Sigmoid colon (tissue), 7 donors: ENCODE measurements at regions of chr11 and their contacts with region 1.

Region 1: DNA sequence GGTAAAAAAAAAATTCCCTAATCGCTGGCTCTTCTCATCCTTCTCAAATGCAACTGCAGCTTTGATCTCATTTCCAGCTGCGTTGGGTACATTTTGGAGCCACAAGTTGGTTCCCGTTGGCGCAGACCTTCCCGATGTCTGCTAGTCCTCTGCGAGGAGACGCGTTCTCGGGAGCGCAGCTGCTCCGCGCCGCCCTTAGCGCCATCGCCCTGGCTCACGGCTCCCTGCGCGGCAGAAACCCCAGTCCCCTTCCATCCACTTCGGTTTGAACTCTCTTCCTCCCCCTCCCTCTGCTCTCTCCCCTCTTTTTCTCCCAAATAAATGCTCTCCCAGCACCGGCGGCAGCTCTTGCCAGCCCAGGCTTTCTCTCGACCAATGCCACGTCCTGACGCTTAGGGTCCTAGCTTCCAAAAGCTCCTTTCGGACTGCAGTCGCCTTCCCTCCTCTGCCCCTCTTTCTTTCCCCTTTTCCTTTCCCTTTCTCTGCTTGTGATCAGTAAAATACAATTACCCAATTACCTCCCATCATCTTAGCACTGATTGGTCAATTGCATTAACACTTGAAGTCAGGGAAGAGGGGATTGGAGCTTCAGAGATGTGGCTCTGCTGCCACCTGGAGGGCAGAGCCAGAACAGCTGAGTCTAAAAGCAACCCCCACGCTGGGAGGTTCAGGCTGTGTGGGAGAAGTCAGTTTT is 1165.7 kb downstream of the LRRC4C start:
- DNase-seq: peak; percentile 80
- H3K4me3 ChIP-seq: peak overlapping the region; percentile 49 to 62 (median 56)
- H3K27ac ChIP-seq: peak overlapping the region; percentile 67 to 73 (median 72)
- H3K4me1 ChIP-seq: peaks cover 0 to 17% (median 13%) of the 10 kb centered on the region in 4 donors
- H3K27me3 ChIP-seq: no peaks in the 10 kb centered on the region
- CTCF ChIP-seq: peak; percentile 82 to 93 (median 89)
- EP300 ChIP-seq: no peak
- POLR2A ChIP-seq: no peak

Region 2: DNA sequence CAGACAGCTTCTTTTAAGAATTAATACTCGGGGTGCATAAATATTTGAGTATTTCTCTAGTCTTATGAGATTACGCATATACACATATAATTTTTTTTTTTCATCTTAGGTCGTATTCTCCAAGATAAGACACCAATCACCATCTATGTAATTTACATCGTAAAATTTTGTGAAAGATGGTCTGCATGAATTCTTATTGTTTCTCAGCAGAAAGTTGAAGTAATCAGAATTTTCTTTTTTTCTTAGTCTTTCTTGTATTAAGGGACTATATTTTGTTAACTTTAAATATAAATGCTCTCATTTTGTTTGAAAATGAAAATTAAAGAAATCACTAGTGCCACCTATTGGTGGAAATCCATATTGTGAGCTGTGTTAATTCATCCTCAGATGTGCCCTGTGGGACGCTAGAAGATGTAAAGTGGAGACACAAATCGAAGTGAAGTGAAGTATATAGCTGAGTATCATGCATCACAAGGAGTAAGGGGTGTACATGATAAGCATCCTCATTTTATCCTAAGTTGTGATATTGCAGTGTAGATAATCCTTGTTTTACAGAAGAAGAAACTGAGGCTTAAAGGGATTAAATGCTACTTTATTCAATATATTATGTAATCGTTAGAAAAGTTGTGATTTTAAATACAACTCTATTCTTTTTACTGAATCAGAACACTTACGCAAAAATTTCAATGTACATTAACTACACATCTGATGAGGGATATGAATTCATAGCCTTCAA is 918.7 kb before region 1 on chr11:
- intact Hi-C with region 1: loop called (anchors 10 kb)
- DNase-seq: no peak
- H3K4me3 ChIP-seq: no peak overlapping the region
- H3K27ac ChIP-seq: no peak overlapping the region
- H3K4me1 ChIP-seq: no peaks in the 10 kb centered on the region
- H3K27me3 ChIP-seq: no peaks in the 10 kb centered on the region
- CTCF ChIP-seq: peak in 3 of 4 experiments; percentile 20 to 54 (median 43)
- EP300 ChIP-seq: no peak
- POLR2A ChIP-seq: no peak

Region 3: GRCh38 chr11:40130427-40130826 is 163.4 kb before region 1 on chr11:
- intact Hi-C with region 1: loop called (anchors 5 kb)
- DNase-seq: no peak
- H3K4me3 ChIP-seq: no peak overlapping the region
- H3K27ac ChIP-seq: no peak overlapping the region
- H3K4me1 ChIP-seq: no peaks in the 10 kb centered on the region
- H3K27me3 ChIP-seq: no peaks in the 10 kb centered on the region
- CTCF ChIP-seq: no peak
- EP300 ChIP-seq: no peak
- POLR2A ChIP-seq: no peak

Region 4: DNA sequence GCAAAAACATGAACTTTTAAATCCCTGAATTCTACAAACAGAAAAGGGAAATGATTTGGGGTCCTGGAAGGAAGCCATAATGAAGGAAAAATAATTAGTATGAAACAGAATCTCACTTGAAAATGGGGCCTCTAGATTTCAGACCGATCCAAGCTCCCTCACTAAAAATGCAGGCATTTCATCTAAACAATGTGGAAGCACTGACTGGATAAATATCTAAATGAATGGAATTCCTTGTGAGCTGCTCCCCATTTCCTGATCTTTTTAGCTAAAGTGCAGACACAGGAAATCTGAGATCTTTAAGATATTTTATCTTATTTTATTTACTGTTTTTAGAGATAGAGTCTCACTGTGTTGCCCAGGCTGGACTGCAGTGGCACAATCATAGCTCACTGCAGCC is 90.2 kb before region 1 on chr11:
- intact Hi-C with region 1: no loop called
- DNase-seq: no peak
- H3K4me3 ChIP-seq: no peak overlapping the region
- H3K27ac ChIP-seq: no peak overlapping the region
- H3K4me1 ChIP-seq: no peaks in the 10 kb centered on the region
- H3K27me3 ChIP-seq: no peaks in the 10 kb centered on the region
- CTCF ChIP-seq: no peak
- EP300 ChIP-seq: no peak
- POLR2A ChIP-seq: no peak

Region 5: DNA sequence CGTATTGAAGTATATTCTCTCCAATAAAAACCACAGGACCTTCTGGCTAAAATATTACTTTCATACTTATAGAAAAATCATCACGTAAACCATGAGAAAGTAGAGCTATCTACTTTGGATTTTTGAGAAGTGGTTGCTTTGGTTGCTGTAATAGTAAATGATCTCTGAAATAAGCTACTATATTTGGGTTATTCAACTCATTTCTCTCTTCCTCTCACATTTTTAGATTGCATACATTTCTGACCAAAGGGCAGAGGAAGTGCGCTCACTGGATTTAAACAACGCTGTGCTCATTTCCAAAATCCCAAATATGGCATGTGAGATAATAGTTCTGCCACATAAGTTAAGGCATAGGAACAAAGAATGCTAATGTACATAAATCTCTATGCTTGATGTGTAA is 808.7 kb after region 1 on chr11:
- intact Hi-C with region 1: no loop called
- DNase-seq: no peak
- H3K4me3 ChIP-seq: no peak overlapping the region
- H3K27ac ChIP-seq: no peak overlapping the region
- H3K4me1 ChIP-seq: no peaks in the 10 kb centered on the region
- H3K27me3 ChIP-seq: no peaks in the 10 kb centered on the region
- CTCF ChIP-seq: no peak
- EP300 ChIP-seq: no peak
- POLR2A ChIP-seq: no peak